ENCODE measurements at regions of chr9 and their contacts with region 1.

Region 1: DNA sequence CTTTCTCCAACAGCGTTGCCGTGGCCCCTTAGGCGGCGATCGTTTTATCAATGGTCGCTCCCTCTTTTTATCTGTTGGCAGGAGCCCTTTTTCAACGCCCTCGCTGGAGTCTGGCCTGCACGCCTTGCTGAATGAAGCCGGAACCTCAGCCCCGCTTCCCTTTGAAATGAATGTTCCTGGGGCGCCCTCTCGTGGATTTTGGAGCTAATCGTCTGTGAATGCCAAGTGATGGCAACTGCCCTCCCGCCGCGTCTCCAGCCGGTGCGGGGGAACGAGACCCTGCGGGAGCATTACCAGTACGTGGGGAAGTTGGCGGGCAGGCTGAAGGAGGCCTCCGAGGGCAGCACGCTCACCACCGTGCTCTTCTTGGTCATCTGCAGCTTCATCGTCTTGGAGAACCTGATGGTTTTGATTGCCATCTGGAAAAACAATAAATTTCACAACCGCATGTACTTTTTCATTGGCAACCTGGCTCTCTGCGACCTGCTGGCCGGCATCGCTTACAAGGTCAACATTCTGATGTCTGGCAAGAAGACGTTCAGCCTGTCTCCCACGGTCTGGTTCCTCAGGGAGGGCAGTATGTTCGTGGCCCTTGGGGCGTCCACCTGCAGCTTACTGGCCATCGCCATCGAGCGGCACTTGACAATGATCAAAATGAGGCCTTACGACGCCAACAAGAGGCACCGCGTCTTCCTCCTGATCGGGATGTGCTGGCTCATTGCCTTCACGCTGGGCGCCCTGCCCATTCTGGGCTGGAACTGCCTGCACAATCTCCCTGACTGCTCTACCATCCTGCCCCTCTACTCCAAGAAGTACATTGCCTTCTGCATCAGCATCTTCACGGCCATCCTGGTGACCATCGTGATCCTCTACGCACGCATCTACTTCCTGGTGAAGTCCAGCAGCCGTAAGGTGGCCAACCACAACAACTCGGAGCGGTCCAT is 10.0 kb downstream of the S1PR3 start:
- DNase-seq: peak; percentile 79
- CTCF ChIP-seq: peak; percentile 65

Region 2: DNA sequence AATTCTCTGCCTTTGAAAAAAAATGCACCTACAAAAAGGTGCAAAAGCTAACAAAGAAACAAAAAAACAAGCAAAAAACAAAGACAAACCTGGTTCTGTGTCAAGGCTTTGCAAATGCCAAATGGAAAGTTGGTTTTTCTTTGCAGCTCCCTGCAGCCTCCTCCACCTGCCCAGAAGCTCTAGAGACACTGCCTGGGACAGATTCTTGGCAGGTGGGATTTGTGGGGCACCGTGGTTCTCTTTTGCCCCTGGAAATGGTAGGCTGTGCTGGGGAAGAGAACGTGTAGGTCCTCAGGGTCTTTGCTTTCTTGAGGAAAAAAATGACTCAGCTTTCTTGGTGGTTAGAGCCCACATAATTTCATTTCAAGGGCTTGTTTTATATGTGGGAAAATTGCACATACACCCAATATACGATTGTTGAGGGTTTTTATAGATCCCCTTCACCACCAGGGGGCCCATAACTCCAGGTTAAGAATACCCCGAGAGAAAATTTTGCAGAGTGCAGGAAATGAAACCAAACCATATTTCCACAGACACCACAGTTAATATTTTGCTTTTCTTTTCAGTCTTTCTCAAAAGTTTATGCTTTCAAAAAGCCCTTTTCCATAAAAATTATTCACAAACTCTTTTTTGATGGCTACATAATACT is 407.6 kb before region 1 on chr9:
- CTCF ChIA-PET with region 1: interaction called, 13 read pairs
- POLR2A ChIA-PET with region 1: no interaction called
- DNase-seq: peak; percentile 60
- CTCF ChIP-seq: peak; percentile 50

Measured in GM10248 (cell line).